PC-9 (cell line): ENCODE measurements at regions of chr7 and their contacts with region 1.

Region 1: GRCh38 chr7:12623897-12624498 is 53.5 kb downstream of the SCIN start:
- DNase-seq: peak in 1 of 2 experiments; percentile 41
- H3K4me3 ChIP-seq: no peak overlapping the region
- H3K27ac ChIP-seq: no peak overlapping the region
- H3K4me1 ChIP-seq: no peaks in the 10 kb centered on the region
- H3K27me3 ChIP-seq: no peaks in the 10 kb centered on the region
- CTCF ChIP-seq: peak; percentile 95

Region 2: DNA sequence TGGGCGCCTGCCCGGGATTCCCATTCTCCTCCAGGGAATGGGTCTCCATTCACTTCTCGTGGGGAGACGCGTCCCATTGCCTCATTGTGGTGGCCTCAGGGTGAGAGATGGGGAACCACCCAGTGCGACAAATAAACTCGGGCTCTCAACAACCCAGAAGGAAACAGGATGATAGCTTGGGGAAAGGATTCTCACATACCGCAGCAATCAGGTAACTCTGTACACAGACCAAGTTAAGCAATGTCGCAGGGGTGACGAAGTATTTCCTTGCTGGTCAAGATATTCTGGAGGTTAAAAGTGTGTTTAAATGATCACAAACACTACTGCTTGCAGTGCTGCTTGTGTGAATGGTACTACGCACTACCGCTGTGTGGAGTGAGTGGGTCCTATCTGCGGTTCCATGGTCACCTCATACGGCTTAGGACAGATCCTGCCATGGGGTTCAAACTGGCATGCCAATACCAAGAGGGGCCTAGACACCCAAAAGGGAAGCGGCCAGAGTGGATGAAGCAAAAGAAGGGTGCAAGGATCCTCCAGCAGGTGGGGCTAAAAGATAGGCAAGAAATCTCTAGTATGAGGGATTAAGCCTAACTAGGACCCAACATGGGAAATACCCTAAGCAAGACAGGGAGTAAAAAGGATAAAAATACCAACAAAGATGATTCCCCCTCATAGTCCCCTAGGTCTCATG is 556.7 kb before region 1 on chr7:
- CTCF ChIA-PET with region 1: no interaction called
- POLR2A ChIA-PET with region 1: no interaction called
- intact Hi-C with region 1: loop called (anchors 10 kb)
- DNase-seq: peak in 1 of 2 experiments; percentile 72
- H3K4me3 ChIP-seq: no peak overlapping the region
- H3K27ac ChIP-seq: peak overlapping the region; percentile 99
- H3K4me1 ChIP-seq: peaks cover 23% of the 10 kb centered on the region
- H3K27me3 ChIP-seq: no peaks in the 10 kb centered on the region
- CTCF ChIP-seq: peak; percentile 61

Region 3: DNA sequence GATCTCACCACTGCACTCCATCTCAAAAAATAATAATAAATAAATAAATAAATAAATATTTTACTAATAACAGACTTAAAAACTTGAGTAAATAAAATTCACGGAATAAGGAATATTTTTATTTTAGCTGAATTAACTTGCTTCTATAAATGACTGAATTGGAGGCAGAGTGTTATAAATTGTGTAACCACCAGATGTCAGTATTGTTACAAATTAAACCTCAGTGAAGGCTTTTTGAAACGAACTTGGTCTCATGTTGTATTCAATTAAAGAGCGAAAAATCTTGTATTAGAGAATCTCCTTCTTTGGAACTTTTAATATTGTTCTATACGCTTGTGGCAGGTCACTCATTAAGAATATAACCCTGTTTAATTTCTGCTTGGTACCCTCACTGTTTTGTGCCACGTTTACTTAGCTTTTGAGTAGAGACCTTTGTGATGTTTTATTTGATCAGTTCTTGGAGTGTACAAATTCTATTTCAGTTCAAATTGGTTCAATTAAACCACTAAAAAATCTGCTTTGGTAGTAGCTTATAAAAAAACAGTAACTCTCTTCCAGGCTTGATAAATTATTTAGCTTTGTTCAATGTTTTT is 99.1 kb before region 1 on chr7:
- CTCF ChIA-PET with region 1: interaction called, 18 read pairs
- POLR2A ChIA-PET with region 1: no interaction called
- intact Hi-C with region 1: loop called (anchors 1 kb)
- DNase-seq: peak in 1 of 2 experiments; percentile 56
- H3K4me3 ChIP-seq: no peak overlapping the region
- H3K27ac ChIP-seq: no peak overlapping the region
- H3K4me1 ChIP-seq: no peaks in the 10 kb centered on the region
- H3K27me3 ChIP-seq: no peaks in the 10 kb centered on the region
- CTCF ChIP-seq: peak; percentile 85

Region 4: GRCh38 chr7:12570534-12571461 is 53.2 kb before region 1 on chr7 and contains the start of gene SCIN:
- CTCF ChIA-PET with region 1: no interaction called
- POLR2A ChIA-PET with region 1: no interaction called
- intact Hi-C with region 1: no loop called
- DNase-seq: peak in 1 of 2 experiments; percentile 55
- H3K4me3 ChIP-seq: peak within 1 kb of the TSS; percentile 60
- H3K27ac ChIP-seq: no peak within 1 kb of the TSS
- H3K4me1 ChIP-seq: peaks cover 22% of the 10 kb centered on the region
- H3K27me3 ChIP-seq: no peaks in the 10 kb centered on the region
- CTCF ChIP-seq: no peak
- total RNA-seq, gene SCIN: 0.33 and 0.92 TPM in 2 replicates

Region 5: DNA sequence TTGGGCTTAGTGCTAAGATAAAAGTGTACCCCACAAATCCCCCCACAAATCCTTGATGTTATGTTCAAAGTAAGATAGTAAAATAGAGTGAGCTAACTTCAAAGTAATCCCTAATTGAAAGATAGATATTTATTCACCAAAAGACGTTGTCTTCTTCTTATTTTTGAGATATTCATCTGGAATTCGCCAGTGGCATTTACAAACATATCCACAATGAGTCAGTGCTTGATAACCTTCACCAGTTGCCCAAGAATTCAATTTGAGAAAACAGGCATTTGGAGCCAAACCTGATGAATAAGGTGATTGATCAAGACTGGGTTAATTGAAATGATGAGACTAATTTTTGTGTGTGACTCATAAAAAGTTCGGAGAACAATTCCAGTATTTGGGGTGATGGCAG is 407.4 kb after region 1 on chr7:
- CTCF ChIA-PET with region 1: no interaction called
- POLR2A ChIA-PET with region 1: interaction called, 15 read pairs
- intact Hi-C with region 1: no loop called
- DNase-seq: peak in 1 of 2 experiments; percentile 58
- H3K4me3 ChIP-seq: no peak overlapping the region
- H3K27ac ChIP-seq: no peak overlapping the region
- H3K4me1 ChIP-seq: no peaks in the 10 kb centered on the region; the same call in 1 of the 2 replicates
- H3K27me3 ChIP-seq: no peaks in the 10 kb centered on the region
- CTCF ChIP-seq: no peak

Region 6: DNA sequence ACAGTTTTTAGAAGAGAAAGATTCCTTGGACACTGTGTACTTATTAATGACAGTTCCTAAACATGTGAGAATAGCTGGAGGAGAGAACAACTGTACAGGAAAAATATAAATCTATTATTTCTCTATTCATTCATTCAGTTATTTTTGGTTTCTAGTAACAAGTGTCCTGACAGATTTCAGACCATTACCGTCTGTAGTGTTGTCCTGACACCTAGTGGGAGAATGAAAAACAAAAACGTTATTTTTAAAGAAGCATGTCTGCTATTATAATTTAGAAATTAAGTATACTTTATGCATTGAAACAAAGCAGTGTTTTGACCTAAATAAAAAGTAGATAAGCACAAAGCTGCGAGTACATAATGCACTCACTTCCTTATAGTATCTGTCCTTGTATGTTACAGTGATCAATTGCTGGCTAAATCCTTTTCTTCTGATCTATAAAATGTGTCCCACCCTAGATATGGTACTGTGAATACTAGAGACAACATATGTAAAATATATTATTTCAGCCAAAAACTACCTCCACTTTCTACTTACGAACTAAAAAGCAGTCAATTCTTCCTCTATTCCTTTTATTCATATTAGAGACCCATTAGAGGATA is 639.0 kb after region 1 on chr7:
- CTCF ChIA-PET with region 1: interaction called, 3 read pairs
- POLR2A ChIA-PET with region 1: no interaction called
- intact Hi-C with region 1: loop called (anchors 1 kb)
- DNase-seq: no peak
- H3K4me3 ChIP-seq: no peak overlapping the region
- H3K27ac ChIP-seq: no peak overlapping the region
- H3K4me1 ChIP-seq: no peaks in the 10 kb centered on the region
- H3K27me3 ChIP-seq: no peaks in the 10 kb centered on the region
- CTCF ChIP-seq: peak; percentile 82